ENCODE measurements at regions of chr2 and their contacts with region 1.

Region 1: GRCh38 chr2:84314901-84315330 is 144.2 kb downstream of the SUCLG1 start:
- DNase-seq: peak; percentile 78 to 95 (median 89)

Region 2: GRCh38 chr2:84022810-84023431 is 292.0 kb before region 1 on chr2:
- intact Hi-C with region 1: loop called (anchors 10 kb)
- DNase-seq: peak in 20 of 42 donors; percentile 7 to 76 (median 40)

Region 3: GRCh38 chr2:84417453-84418145 is 102.7 kb after region 1 on chr2:
- intact Hi-C with region 1: no loop called
- DNase-seq: no peak

Region 4: GRCh38 chr2:84676295-84676694 is 361.4 kb after region 1 on chr2:
- intact Hi-C with region 1: no loop called
- DNase-seq: no peak